ENCODE measurements at regions of chr3 and their contacts with region 1.

Region 1: DNA sequence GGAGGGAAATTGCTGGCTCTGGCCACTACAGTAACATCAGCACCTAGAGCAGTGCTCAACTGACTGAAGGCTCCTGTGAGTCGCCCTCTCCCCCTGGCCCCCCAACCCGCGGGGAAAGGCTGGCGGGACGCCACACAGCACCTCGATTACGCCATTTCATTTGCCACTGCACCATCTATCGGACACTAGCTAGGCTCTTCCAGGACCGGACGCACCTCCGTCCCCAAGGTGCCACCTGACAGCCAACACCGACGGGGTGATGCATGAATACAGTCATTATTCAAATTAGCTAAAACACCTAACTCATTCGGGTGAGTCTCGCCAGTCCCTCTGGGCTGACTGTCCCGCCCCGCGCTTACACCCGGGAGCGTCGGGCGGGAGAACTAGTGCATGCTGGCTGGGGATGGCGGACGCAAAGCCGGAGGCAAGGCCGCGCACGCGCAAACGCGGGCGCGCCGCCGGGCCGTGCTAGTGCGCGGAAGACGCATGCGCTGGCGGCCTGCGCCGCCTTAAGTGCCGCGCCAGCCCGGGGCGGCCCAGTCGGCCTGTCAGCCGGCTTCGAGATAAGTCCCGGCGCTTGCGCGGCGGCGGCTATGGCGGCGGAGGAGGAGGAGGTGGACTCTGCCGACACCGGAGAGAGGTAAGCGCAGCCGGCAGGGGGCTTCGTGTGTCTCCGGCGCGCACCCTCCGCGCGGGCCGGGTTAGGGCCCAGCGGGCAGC is at the start of gene ABHD5:
- DNase-seq: peak; percentile 91
- H3K4me3 Mint-ChIP-seq: peak within 1 kb of the TSS; percentile 92
- H3K27ac Mint-ChIP-seq: peak within 1 kb of the TSS; percentile 92
- H3K4me1 Mint-ChIP-seq: peaks cover 39% of the 10 kb centered on the region
- H3K27me3 Mint-ChIP-seq: peaks cover 2% of the 10 kb centered on the region
- total RNA-seq, gene ABHD5: 20.2 and 20.4 TPM in 2 replicates

Region 2: GRCh38 chr3:43105596-43106292 is 584.8 kb before region 1 on chr3 and contains the start of gene POMGNT2:
- intact Hi-C with region 1: loop called (anchors 5 kb)
- DNase-seq: peak; percentile 82
- H3K4me3 Mint-ChIP-seq: peak within 1 kb of the TSS; percentile 72
- H3K27ac Mint-ChIP-seq: no peak within 1 kb of the TSS
- H3K4me1 Mint-ChIP-seq: peaks cover 12% of the 10 kb centered on the region
- H3K27me3 Mint-ChIP-seq: peaks cover 4% of the 10 kb centered on the region
- total RNA-seq, gene POMGNT2: 8.3 and 9.8 TPM in 2 replicates

Region 3: DNA sequence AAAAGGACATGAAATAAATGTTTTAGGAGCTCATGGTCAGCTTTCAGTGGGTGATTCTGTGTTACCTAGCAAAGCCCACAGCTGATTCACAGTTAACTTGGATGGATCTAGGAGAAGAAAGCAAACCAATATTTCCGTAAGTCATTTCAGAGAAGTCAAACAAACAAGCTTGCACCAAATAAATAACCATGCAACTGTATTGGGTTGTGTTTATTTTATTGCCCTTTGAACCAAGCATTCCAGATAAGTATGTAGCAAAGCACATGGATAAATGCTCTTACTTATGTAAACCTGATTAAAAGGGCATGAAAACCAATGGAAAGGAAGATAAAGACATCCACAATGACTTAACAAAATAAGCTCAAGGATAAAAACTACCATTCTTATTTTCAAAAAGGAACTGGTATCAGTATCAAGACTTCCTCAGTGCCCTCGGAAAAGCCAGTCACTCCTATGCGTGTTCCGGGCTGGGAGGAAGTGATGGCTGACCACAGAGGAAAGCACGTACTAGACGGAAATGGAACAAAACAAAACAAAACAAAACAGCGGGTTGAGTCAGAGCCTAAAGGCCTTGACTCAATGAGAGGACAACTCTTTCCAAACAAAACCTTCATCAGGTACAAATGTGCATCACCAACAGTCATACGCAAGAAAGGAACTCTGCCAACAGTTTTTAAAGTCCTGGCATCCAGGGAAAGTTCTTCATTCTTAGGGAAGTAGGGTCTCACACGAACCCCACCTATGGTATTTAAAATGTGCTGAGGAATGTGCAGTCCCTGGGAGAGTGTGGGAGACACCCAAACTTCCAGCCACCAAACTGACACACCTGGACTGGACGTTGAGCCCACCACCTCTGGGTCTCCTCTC is 300.9 kb before region 1 on chr3:
- intact Hi-C with region 1: loop called (anchors 5 kb)
- DNase-seq: peak; percentile 72
- H3K4me3 Mint-ChIP-seq: peak overlapping the region; percentile 35
- H3K27ac Mint-ChIP-seq: peak overlapping the region; percentile 81
- H3K4me1 Mint-ChIP-seq: peaks cover 52% of the 10 kb centered on the region
- H3K27me3 Mint-ChIP-seq: peaks cover 6% of the 10 kb centered on the region

Region 4: DNA sequence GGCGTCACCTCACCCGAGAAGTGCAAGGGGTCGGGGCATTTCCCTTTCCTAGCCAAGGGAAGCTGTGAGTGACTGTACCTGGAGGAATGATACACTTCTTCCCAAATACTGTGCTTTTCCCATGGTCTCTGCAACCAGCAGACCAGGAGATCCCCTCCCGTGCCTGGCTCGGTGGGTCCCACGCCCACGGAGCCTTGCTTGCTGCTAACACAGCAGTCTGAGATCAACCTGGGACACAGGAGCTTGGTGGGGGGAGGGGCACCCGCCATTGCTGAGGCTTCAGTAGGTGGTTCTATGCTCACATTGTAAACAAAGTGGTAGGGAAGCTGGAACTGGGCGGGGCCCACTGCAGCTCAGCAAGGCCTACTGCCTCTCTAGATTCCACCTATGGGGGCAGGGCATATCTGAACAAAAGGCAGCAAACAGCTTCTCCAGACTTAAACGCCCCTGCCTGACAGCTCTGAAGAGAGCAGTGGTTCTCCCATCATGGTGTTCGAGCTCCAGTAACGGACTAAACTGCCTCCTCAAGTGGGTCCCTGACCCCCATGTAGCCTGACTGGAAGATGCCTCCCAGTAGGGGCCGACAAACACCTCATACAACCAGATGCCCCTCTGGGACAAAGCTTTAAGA is 31.2 kb before region 1 on chr3:
- intact Hi-C with region 1: no loop called
- DNase-seq: no peak
- H3K4me3 Mint-ChIP-seq: no peak overlapping the region
- H3K27ac Mint-ChIP-seq: no peak overlapping the region
- H3K4me1 Mint-ChIP-seq: no peaks in the 10 kb centered on the region
- H3K27me3 Mint-ChIP-seq: peaks cover 6% of the 10 kb centered on the region

Region 5: GRCh38 chr3:43753781-43754201 is 63.2 kb after region 1 on chr3:
- intact Hi-C with region 1: loop called (anchors 2 kb)
- DNase-seq: no peak
- H3K4me3 Mint-ChIP-seq: no peak overlapping the region
- H3K27ac Mint-ChIP-seq: no peak overlapping the region
- H3K4me1 Mint-ChIP-seq: peaks cover 15% of the 10 kb centered on the region
- H3K27me3 Mint-ChIP-seq: peaks cover 1% of the 10 kb centered on the region

Region 6: GRCh38 chr3:44198284-44199269 is 508.0 kb after region 1 on chr3:
- intact Hi-C with region 1: loop called (anchors 1 kb)
- DNase-seq: peak; percentile 49
- H3K4me3 Mint-ChIP-seq: no peak overlapping the region
- H3K27ac Mint-ChIP-seq: no peak overlapping the region
- H3K4me1 Mint-ChIP-seq: no peaks in the 10 kb centered on the region
- H3K27me3 Mint-ChIP-seq: peaks cover 7% of the 10 kb centered on the region

Region 7: DNA sequence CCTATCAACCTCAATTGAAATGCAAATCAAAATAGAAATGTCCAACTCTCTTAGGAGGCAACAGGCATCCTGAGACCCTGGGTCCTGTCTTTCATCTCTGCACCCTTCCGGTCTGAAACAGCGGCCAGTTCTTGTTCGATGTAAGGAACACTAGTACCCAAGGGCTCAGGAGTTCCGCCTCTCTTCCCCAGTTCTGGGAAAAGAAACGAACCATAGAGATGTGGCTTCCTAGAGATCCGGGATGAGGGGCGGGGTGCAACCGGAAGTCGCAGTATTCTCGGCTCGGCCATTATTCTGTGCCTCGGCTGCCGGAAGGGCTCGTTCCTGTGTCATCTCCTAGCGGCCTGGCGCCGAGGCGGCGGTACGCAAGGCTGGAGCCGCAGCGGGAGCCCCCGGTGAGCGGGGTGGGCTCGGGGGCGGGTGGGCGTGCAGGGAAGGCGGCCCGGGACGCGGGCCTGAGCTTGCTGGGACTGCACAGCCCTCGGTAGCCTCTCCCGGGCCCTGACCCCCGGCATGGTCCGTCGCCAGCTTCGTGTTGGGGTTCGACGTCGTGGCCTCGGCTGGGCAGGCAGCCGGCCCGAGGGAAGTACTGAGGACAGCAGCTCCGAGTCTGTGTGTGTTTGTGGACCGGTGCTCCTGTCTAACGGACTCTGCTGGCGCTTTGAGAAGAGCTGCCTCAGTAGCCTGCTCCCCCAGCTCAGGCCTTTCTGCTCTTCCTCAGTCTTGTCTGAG is 934.4 kb after region 1 on chr3 and contains the start of gene ZNF197:
- intact Hi-C with region 1: loop called (anchors 10 kb)
- DNase-seq: peak; percentile 54
- H3K4me3 Mint-ChIP-seq: peak within 1 kb of the TSS; percentile 90
- H3K27ac Mint-ChIP-seq: peak within 1 kb of the TSS; percentile 80
- H3K4me1 Mint-ChIP-seq: peaks cover 25% of the 10 kb centered on the region
- H3K27me3 Mint-ChIP-seq: no peaks in the 10 kb centered on the region
- total RNA-seq, gene ZNF197: 11.6 and 12.0 TPM in 2 replicates

Region 8: DNA sequence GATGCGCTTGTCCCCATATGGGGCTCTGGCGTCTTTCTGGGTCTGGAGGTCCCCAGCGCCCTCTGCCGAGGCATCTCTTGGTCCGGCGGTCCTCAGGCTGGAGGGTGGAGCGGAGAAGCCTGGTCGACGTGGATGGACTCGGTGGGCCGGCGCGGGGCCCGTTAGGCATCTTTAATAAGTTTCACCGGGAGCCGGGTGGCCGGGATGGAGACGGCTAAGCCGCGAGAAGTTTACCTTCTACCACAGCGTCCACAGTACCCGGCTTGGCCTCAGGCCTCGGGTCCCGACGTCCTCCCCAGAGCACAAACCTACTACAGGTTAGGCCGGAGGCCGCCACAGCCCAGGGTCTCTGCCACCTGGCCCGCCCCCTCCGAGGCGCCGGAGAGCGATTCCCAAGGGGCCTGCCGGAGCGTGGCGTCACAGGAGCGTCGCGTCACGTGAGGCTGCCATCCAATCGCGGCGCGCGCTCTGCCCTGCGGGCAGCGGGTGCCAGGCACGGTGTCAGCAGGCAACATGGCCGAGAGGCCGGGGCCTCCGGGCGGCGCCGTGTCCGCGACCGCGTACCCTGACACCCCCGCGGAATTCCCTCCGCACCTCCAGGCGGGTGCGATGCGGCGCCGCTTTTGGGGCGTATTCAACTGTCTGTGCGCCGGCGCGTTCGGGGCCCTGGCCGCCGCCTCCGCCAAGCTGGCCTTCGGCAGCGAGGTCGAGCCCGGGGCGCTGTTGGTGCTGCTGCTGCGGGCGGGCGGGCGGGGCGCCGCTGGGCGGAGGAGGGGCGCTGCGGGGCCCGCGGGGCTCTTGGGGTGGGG is 1171.1 kb after region 1 on chr3 and contains the start of gene TMEM42:
- intact Hi-C with region 1: loop called (anchors 10 kb)
- DNase-seq: peak; percentile 87
- H3K4me3 Mint-ChIP-seq: peak within 1 kb of the TSS; percentile 90
- H3K27ac Mint-ChIP-seq: peak within 1 kb of the TSS; percentile 90
- H3K4me1 Mint-ChIP-seq: peaks cover 33% of the 10 kb centered on the region
- H3K27me3 Mint-ChIP-seq: no peaks in the 10 kb centered on the region
- total RNA-seq, gene TMEM42: 8.6 and 10.0 TPM in 2 replicates